ENCODE measurements at regions of chr11 and their contacts with region 1.

Region 1: GRCh38 chr11:75996523-75997442 is 181.8 kb downstream of the UVRAG start:
- DNase-seq: no peak
- ATAC-seq: no peak
- H3K4me3 Mint-ChIP-seq: no peak overlapping the region
- H3K27ac Mint-ChIP-seq: no peak overlapping the region
- H3K4me1 Mint-ChIP-seq: no peaks in the 10 kb centered on the region
- H3K27me3 Mint-ChIP-seq: no peaks in the 10 kb centered on the region
- CTCF ChIP-seq: no peak

Region 2: GRCh38 chr11:75773595-75774353 is 223.0 kb before region 1 on chr11:
- CTCF ChIA-PET with region 1: no interaction called
- POLR2A ChIA-PET with region 1: interaction called, 11 read pairs
- DNase-seq: no peak
- ATAC-seq: no peak
- H3K4me3 Mint-ChIP-seq: no peak overlapping the region
- H3K27ac Mint-ChIP-seq: no peak overlapping the region
- H3K4me1 Mint-ChIP-seq: peaks cover 27% of the 10 kb centered on the region
- H3K27me3 Mint-ChIP-seq: peaks cover 44% of the 10 kb centered on the region
- CTCF ChIP-seq: no peak

Measured in WTC11 (cell line).